Heart right ventricle (tissue), 16 donors: ENCODE measurements at regions of chrX and their contacts with region 1.

Region 1: DNA sequence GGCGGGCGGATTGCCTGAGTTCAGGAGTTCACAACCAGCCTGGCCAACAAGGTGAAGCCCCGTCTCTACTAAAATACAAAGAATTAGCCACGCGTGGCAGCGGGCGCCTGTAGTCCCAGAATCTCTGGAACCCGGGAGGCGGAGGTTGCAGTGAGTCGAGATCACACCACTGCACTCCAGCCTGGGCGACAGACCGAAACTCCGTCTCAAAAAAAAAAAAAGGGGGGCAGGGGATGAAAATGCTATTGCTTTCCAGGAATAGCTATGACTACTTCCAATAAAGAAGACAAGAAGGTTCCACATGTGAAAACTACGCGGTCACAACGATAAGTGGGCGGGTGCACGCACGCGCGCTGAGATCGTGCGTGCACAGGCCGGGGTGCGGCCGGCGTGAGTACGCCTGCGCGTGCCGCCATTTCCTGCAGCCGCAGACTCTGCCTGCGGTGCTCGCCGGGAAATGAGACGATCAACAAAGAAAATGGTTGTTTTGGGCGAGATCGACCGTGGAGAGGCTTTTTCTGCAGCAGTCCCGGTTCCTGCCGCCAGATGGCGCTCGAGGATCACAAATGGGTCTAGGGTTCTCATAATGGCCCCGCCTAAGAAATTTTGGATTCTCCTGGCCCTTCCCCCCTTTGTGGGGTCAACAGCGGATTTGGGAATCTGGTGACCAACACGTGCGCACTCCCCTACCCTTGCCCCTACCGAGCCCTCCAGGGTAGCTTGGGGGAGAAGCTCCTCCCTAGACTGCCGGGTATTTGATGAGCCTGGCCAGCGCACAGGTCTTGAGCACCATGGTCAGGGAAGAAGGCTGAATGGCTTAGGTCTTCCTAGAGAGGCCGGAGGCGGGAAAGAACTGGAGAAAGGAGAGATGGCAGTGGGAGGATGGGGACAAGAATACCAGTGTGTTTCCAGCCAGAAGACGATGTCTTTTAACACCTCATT is 35.1 kb downstream of the PNMA5 start:
- DNase-seq: peak; percentile 86 to 87
- ATAC-seq: peak; percentile 94 to 99 (median 99)
- H3K4me3 ChIP-seq: peak overlapping the region in 9 of 10 donors; percentile 7 to 47 (median 39)
- H3K27ac ChIP-seq: peak overlapping the region in 8 of 10 donors; percentile 35 to 77 (median 62)
- H3K4me1 ChIP-seq: peaks cover 0 to 9% (median 0%) of the 10 kb centered on the region in 9 donors
- H3K27me3 ChIP-seq: peaks cover 0 to 18% (median 0%) of the 10 kb centered on the region in 7 donors
- CTCF ChIP-seq: peak; percentile 65 to 95 (median 83)

Region 2: DNA sequence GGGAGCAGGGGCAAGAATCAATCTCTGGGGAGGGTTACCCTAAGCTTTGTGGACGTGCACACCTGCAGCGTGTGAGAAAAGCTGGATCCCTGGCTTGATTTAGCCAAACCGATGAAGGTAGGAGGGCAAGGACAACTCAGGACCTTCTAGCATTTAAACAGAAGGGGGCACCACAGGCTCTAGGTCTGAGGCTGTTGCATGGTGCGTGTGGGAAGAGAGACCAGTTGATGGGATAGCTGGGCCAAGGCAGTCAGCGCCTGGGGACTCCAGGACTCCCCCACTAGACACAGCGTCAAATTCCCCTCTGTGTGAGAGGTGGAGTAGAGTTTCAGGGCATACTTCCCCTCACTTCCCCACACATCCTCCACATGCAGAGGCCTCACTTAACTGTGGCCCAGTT is 316.8 kb before region 1 on chrX:
- intact Hi-C with region 1: no loop called
- DNase-seq: no peak
- ATAC-seq: peak in 2 of 8 donors; percentile 57 to 62
- H3K4me3 ChIP-seq: no peak overlapping the region
- H3K27ac ChIP-seq: no peak overlapping the region
- H3K4me1 ChIP-seq: no peaks in the 10 kb centered on the region
- H3K27me3 ChIP-seq: peaks cover 0 to 54% (median 24%) of the 10 kb centered on the region in 7 donors
- CTCF ChIP-seq: peak in 6 of 9 donors; percentile 10 to 33 (median 22)

Region 3: DNA sequence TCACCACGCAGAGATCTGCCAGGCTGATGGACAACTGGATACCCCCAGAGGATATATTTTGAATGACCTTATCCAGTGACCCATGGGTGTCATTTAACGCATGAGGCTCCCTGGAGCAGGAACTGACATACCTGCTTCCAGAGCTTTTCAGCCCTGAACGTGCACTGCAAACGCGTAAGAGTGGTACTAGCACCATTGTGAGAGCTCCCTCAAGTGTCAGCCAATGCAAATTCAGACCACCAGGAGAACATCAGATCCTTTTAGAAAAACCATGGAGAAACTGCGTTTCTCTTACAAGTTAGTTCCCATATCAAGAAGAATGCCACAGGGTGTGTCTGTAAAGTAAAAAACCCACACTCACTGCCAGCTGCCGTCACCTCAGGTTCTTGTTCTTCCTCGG is 479.7 kb after region 1 on chrX:
- intact Hi-C with region 1: loop called in 1 of 10 experiments (anchors 10 kb)
- DNase-seq: no peak
- ATAC-seq: peak in 1 of 8 donors; percentile 50
- H3K4me3 ChIP-seq: no peak overlapping the region
- H3K27ac ChIP-seq: no peak overlapping the region
- H3K4me1 ChIP-seq: no peaks in the 10 kb centered on the region
- H3K27me3 ChIP-seq: peaks cover 0 to 4% (median 0%) of the 10 kb centered on the region in 7 donors
- CTCF ChIP-seq: peak in 6 of 9 donors; percentile 10 to 56 (median 34)

Region 4: DNA sequence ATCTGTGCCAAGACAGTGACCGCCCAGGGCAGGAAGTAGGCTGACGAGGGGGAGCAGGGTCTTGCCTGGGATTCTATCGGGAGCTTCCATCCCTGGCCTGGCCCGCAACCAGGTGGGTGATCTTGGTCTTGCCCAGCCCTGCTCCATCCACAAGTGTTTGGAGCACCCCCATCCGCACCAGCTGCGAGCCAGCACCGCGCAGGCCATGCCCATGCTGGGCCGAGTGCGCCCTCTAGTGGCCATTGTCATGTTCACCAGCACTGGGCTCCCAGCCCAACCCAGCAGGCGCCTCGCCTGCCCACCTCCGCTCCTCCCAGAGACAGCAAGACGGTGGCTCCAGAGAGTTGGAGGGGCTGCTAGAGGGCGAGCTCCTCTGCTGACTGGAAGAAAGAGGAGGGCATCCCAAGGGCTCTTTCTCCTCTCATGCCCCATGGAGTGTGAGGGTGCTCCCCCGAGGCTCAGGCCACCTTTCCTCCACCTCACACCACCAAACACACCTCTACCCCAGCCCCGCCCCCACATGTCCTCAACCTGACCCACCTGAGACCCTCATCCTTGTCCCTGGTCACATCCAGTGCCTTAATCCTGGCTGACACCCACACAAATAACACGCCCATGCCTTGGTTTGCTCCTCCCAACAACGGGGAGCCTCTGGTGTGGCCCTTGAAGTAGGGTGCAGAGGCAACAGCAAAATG is 548.8 kb after region 1 on chrX:
- intact Hi-C with region 1: loop called in 1 of 10 experiments (anchors 5 kb)
- DNase-seq: peak; percentile 74 to 83
- ATAC-seq: peak; percentile 77 to 93 (median 86)
- H3K4me3 ChIP-seq: no peak overlapping the region
- H3K27ac ChIP-seq: peak overlapping the region in 1 of 10 donors; percentile 10
- H3K4me1 ChIP-seq: peaks cover 0 to 10% (median 0%) of the 10 kb centered on the region in 9 donors
- H3K27me3 ChIP-seq: peaks cover 0 to 10% (median 0%) of the 10 kb centered on the region in 7 donors
- CTCF ChIP-seq: peak; percentile 65 to 95 (median 82)

Region 5: DNA sequence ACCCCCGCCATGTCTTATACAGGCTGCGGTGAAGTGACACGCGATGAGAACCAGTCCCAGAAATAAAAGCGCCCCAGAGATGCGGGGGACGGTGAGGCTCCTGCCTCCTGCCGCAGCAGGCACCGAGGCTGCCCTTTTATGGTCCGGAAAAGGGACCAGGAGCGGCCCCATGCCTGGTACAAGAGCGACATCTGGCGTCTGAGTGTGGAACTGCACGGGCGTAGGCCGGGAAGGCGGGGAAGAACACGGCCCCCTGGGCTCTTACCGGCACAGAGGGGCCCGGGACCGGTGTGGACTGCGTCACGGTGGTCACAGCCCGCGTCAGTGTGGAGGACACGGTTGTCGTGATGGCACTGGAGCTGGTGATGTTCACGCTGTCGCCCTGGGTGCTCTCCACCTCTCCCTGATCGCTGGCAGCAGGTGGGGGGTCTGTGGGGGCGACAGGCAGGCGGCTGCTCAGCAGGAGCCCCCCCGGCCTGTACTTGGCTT is 994.6 kb after region 1 on chrX:
- intact Hi-C with region 1: loop called in 1 of 10 experiments (anchors 10 kb)
- DNase-seq: peak; percentile 56 to 68
- ATAC-seq: peak; percentile 59 to 76 (median 67)
- H3K4me3 ChIP-seq: no peak overlapping the region
- H3K27ac ChIP-seq: peak overlapping the region in 6 of 10 donors; percentile 8 to 69 (median 42)
- H3K4me1 ChIP-seq: peaks cover 0 to 28% (median 10%) of the 10 kb centered on the region in 9 donors
- H3K27me3 ChIP-seq: no peaks in the 10 kb centered on the region
- CTCF ChIP-seq: peak; percentile 84 to 100 (median 89)